ENCODE measurements at regions of chr18 and their contacts with region 1.

Region 1: GRCh38 chr18:29430416-29430815 is 1253.5 kb upstream of the CDH2 start:
- DNase-seq: no peak
- ATAC-seq: no peak
- H3K4me3 Mint-ChIP-seq: no peak overlapping the region
- H3K27ac Mint-ChIP-seq: no peak overlapping the region
- H3K4me1 Mint-ChIP-seq: no peaks in the 10 kb centered on the region
- H3K27me3 Mint-ChIP-seq: no peaks in the 10 kb centered on the region
- CTCF ChIP-seq: no peak

Region 2: GRCh38 chr18:27942701-27943100 is 1487.7 kb before region 1 on chr18:
- CTCF ChIA-PET with region 1: no interaction called
- POLR2A ChIA-PET with region 1: no interaction called
- intact Hi-C with region 1: no loop called
- DNase-seq: no peak
- ATAC-seq: no peak
- H3K4me3 Mint-ChIP-seq: no peak overlapping the region
- H3K27ac Mint-ChIP-seq: no peak overlapping the region
- H3K4me1 Mint-ChIP-seq: no peaks in the 10 kb centered on the region
- H3K27me3 Mint-ChIP-seq: no peaks in the 10 kb centered on the region
- CTCF ChIP-seq: no peak

Region 3: DNA sequence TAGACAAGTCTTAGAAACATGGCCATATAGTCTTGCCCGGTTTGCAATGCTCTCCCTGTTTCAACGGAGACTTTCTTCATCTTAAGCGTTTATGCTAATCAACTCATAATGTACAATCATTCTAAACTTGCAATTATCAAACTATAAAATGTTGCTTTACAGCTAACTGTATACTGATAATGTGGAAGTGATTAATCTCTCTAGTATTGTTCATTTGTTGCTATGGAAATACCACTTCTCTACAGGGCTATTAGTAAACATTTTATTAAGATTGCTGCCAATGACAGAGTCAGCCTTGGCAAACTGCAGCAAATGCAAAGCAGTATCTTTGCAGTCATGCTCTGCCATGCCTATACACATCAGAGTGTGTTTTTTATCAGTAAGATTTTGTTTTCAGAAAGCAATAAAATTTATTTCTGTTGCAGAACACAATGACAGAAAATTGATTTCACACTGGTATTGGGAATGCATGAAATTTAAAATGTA is 51.7 kb before region 1 on chr18:
- CTCF ChIA-PET with region 1: no interaction called
- POLR2A ChIA-PET with region 1: no interaction called
- intact Hi-C with region 1: no loop called
- DNase-seq: no peak
- ATAC-seq: no peak
- H3K4me3 Mint-ChIP-seq: no peak overlapping the region
- H3K27ac Mint-ChIP-seq: no peak overlapping the region
- H3K4me1 Mint-ChIP-seq: no peaks in the 10 kb centered on the region
- H3K27me3 Mint-ChIP-seq: no peaks in the 10 kb centered on the region
- CTCF ChIP-seq: no peak

Region 4: DNA sequence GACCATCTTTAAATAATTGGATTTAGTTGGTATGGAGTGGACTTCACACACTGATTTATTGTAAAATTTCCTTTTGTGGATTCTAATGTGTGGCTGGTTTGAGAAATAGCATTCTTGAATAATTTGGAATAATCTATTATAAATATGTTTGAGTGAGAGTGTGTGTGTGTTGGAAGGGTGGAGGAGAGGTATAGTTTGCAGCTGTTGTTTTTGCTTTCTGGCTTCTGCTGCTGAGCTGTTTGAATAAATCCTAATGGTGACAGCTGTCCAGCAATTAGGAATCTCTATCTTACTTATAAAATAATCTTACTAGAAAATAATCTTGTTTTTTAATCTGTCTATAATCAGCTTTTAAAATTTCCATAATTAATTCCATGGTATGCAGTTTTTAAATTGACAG is 29.6 kb after region 1 on chr18:
- CTCF ChIA-PET with region 1: no interaction called
- POLR2A ChIA-PET with region 1: no interaction called
- intact Hi-C with region 1: loop called (anchors 5 kb)
- DNase-seq: no peak
- ATAC-seq: no peak
- H3K4me3 Mint-ChIP-seq: no peak overlapping the region
- H3K27ac Mint-ChIP-seq: no peak overlapping the region
- H3K4me1 Mint-ChIP-seq: no peaks in the 10 kb centered on the region
- H3K27me3 Mint-ChIP-seq: no peaks in the 10 kb centered on the region
- CTCF ChIP-seq: no peak

Measured in activated B cell treated with CpG ODN at 0.5 μM for 24 hours (primary cell).